Left ventricle myocardium superior (tissue), 1 donor: ENCODE measurements at regions of chr16 and their contacts with region 1.

Region 1: DNA sequence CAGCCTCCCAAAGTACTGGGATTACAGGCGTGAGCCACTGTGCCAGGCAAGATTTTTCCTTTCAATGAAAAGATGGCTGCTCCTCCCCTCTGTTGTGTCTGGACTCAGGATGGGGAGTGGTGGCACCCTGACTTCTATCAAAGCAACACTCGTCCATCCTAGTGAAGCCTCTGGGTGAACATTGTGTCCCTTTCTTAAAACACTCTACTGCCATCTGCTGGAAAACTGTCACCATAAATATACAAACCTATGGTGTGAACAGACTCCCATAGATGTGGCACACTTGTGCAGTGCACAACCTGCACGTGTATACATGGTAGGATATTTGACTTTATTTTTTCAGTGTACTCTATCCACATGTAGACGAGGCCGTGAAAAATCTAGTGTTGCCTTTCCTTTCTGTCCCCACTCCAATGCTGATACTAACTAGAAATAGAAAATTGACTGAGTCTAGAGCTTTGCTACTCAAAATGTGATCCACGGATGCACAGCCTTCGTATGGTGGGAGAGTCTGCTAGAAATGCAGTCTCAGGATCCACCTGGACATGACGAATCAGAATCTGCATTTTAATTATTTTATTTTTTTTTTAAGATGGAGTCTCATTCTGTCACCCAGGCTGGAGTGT is 55.9 kb upstream of the PLCG2 start:
- DNase-seq: no peak
- ATAC-seq: peak; percentile 95

Region 2: GRCh38 chr16:81366316-81366932 is 356.8 kb before region 1 on chr16:
- intact Hi-C with region 1: loop called (anchors 10 kb)
- DNase-seq: no peak
- ATAC-seq: peak; percentile 61

Region 3: DNA sequence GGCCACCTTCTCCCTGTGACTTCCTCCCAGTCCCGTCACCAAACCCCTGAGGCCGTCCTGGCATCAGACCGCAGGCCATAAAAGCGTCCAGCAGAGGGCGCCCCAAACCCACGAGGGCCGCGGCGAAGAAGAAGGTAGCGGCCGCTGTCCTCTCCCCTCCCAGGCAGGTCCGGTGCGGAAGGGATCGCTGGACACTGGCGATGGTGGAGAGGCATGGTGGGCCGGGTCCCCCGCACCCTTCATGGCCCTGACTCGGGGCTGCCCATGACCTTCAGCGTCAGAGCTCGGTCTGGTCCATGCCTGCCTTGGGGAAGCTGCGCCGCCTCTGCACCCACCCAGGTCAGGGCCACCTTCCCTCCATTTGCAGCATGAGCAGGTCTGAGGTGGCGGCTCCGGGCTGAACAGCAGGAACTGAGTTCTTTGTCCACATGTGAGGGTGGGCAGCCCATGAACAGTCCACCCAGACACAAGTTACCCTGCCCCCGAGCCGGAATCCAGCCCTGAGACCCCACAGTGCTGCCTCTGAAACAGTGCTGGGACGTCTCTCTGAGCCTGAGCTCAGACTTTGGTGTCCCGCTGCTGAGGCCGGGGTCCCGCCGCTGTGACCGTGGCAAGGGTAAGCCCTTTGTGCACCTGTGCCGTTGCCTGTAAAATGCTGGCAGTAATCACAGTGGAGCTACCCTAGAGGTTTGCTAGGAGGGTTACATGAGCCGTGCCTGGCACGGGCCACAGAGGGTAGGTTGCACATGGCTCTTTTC is 319.4 kb before region 1 on chr16:
- intact Hi-C with region 1: loop called (anchors 10 kb)
- DNase-seq: peak; percentile 92
- ATAC-seq: peak; percentile 95

Region 4: GRCh38 chr16:81612351-81613163 is 110.7 kb before region 1 on chr16:
- intact Hi-C with region 1: no loop called
- DNase-seq: peak; percentile 55
- ATAC-seq: peak; percentile 44

Region 5: DNA sequence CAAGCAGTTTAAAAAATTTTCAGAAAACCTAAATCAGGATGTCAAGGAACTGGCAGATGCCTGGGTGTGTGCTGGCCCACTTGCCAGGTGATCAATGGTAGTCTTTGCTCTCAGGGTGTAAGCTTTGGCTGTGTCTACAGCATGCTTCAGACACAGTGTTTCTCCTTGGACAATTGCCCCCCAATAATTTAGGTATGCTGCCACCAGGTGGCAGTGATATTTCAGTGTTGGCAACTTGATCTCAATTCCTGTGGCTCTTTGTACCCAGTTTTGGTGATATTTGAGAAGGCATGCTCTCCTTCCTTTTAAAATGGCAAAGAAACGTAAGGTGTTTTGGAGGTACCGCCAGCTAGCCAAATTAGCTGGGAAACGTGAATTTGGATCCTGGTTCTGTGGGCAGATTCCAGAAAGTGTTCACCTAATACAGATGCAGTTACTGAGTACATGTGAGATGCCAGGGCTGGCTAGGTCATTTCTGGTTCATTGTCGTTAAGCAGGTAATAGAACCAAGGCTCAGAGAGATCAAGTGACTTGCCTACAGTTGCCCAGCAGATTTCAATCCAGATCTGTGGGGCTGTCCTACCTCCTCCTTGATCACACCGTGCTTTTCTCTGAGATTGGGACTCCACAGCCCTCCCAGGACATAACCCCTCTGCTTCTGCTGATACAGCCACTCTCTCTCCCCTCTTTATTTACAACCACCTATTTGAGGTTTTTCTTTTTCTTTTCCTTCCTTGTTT is 99.7 kb before region 1 on chr16:
- intact Hi-C with region 1: loop called (anchors 10 kb)
- DNase-seq: no peak
- ATAC-seq: peak; percentile 16

Region 6: GRCh38 chr16:81808933-81809496 is 85.8 kb after region 1 on chr16:
- intact Hi-C with region 1: no loop called
- DNase-seq: no peak
- ATAC-seq: no peak